WTC11 (cell line): ENCODE measurements at regions of chr6 and their contacts with region 1.

Region 1: GRCh38 chr6:36885461-36886401 is at the start of gene C6orf89:
- DNase-seq: peak; percentile 95
- ATAC-seq: peak; percentile 99
- H3K4me3 Mint-ChIP-seq: peak within 1 kb of the TSS; percentile 91
- H3K27ac Mint-ChIP-seq: peak within 1 kb of the TSS; percentile 96
- H3K4me1 Mint-ChIP-seq: peaks cover 17% of the 10 kb centered on the region
- H3K27me3 Mint-ChIP-seq: no peaks in the 10 kb centered on the region
- CTCF ChIP-seq: peak; percentile 64
- total RNA-seq, gene C6orf89: 13.2 to 15.6 TPM (median 15.0 TPM) in 3 replicates

Region 2: GRCh38 chr6:36874443-36875249 is 11.1 kb before region 1 on chr6 and contains the start of gene PPIL1:
- CTCF ChIA-PET with region 1: interaction called, 70 read pairs
- POLR2A ChIA-PET with region 1: interaction called, 8 read pairs
- DNase-seq: peak; percentile 74
- ATAC-seq: peak; percentile 87
- H3K4me3 Mint-ChIP-seq: peak within 1 kb of the TSS; percentile 93
- H3K27ac Mint-ChIP-seq: peak within 1 kb of the TSS; percentile 100
- H3K4me1 Mint-ChIP-seq: peaks cover 19% of the 10 kb centered on the region
- H3K27me3 Mint-ChIP-seq: peaks cover 17% of the 10 kb centered on the region
- CTCF ChIP-seq: no peak
- total RNA-seq, gene PPIL1: 64.2 to 69.8 TPM (median 66.6 TPM) in 3 replicates

Region 3: DNA sequence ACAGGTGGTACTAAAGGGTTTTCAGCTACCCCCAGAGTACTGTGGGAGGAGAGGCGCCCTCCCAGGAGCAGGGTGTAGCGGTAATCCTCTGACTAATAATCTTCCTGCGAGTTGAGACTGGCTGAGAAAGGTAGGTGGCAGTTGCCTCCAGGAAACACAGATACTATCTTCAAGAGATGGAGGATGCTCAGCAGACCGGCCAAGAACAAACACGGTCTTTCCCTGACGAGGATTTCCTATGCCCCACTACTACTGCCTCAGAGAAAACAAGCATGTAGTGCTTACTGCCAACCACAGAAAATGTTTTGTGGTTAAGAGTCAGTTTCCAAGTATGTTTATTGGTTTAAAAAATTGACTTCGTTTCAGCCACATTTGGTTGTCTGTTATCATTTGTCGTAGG is 26.9 kb after region 1 on chr6:
- CTCF ChIA-PET with region 1: interaction called, 29 read pairs
- POLR2A ChIA-PET with region 1: no interaction called
- DNase-seq: no peak
- ATAC-seq: no peak
- H3K4me3 Mint-ChIP-seq: no peak overlapping the region
- H3K27ac Mint-ChIP-seq: no peak overlapping the region
- H3K4me1 Mint-ChIP-seq: peaks cover 5% of the 10 kb centered on the region
- H3K27me3 Mint-ChIP-seq: no peaks in the 10 kb centered on the region
- CTCF ChIP-seq: no peak

Region 4: GRCh38 chr6:36985808-36986703 is 100.3 kb after region 1 on chr6 and contains the start of gene MTCH1:
- CTCF ChIA-PET with region 1: interaction called, 10 read pairs
- POLR2A ChIA-PET with region 1: no interaction called
- DNase-seq: peak; percentile 80
- ATAC-seq: peak; percentile 78
- H3K4me3 Mint-ChIP-seq: peak within 1 kb of the TSS; percentile 98
- H3K27ac Mint-ChIP-seq: peak within 1 kb of the TSS; percentile 95
- H3K4me1 Mint-ChIP-seq: peaks cover 20% of the 10 kb centered on the region
- H3K27me3 Mint-ChIP-seq: no peaks in the 10 kb centered on the region
- CTCF ChIP-seq: no peak
- total RNA-seq, gene MTCH1: 198 to 207 TPM (median 204 TPM) in 3 replicates

Region 5: GRCh38 chr6:36997811-36998722 is 112.3 kb after region 1 on chr6:
- CTCF ChIA-PET with region 1: no interaction called
- POLR2A ChIA-PET with region 1: no interaction called
- DNase-seq: no peak
- ATAC-seq: 0 out of 2 replicates have a peak, but pooled peaks have one; percentile 43
- H3K4me3 Mint-ChIP-seq: no peak overlapping the region
- H3K27ac Mint-ChIP-seq: no peak overlapping the region
- H3K4me1 Mint-ChIP-seq: peaks cover 22% of the 10 kb centered on the region
- H3K27me3 Mint-ChIP-seq: no peaks in the 10 kb centered on the region
- CTCF ChIP-seq: no peak

Region 6: GRCh38 chr6:37011656-37012378 is 126.1 kb after region 1 on chr6:
- CTCF ChIA-PET with region 1: no interaction called
- POLR2A ChIA-PET with region 1: no interaction called
- DNase-seq: no peak
- ATAC-seq: no peak
- H3K4me3 Mint-ChIP-seq: no peak overlapping the region
- H3K27ac Mint-ChIP-seq: no peak overlapping the region
- H3K4me1 Mint-ChIP-seq: 0 out of 2 replicates have a peak, but pooled peaks cover 2% of the 10 kb centered on the region
- H3K27me3 Mint-ChIP-seq: no peaks in the 10 kb centered on the region
- CTCF ChIP-seq: no peak